CD14-positive monocyte (primary cell): ENCODE measurements at regions of chr12 and their contacts with region 1.

Region 1: GRCh38 chr12:51954561-51955361 is 3.3 kb downstream of the ACVR1B start:
- DNase-seq: peak; percentile 48 to 75 (median 71)
- H3K4me3 ChIP-seq: peak overlapping the region in 2 of 3 experiments; percentile 20 to 96
- H3K4me3 Mint-ChIP-seq: peak overlapping the region; percentile 91 to 96
- H3K27ac ChIP-seq: peak overlapping the region in 1 of 2 donors; percentile 82
- H3K27ac Mint-ChIP-seq: peak overlapping the region; percentile 73 to 88 (median 85)
- H3K4me1 ChIP-seq: peaks cover 50 to 61% of the 10 kb centered on the region in 2 donors
- H3K4me1 Mint-ChIP-seq: peaks cover 68% of the 10 kb centered on the region
- H3K27me3 ChIP-seq: peaks cover 3 to 5% of the 10 kb centered on the region in 2 donors
- H3K27me3 Mint-ChIP-seq: peaks cover 1 to 6% (median 4%) of the 10 kb centered on the region in 3 donors
- CTCF ChIP-seq: no peak

Region 2: DNA sequence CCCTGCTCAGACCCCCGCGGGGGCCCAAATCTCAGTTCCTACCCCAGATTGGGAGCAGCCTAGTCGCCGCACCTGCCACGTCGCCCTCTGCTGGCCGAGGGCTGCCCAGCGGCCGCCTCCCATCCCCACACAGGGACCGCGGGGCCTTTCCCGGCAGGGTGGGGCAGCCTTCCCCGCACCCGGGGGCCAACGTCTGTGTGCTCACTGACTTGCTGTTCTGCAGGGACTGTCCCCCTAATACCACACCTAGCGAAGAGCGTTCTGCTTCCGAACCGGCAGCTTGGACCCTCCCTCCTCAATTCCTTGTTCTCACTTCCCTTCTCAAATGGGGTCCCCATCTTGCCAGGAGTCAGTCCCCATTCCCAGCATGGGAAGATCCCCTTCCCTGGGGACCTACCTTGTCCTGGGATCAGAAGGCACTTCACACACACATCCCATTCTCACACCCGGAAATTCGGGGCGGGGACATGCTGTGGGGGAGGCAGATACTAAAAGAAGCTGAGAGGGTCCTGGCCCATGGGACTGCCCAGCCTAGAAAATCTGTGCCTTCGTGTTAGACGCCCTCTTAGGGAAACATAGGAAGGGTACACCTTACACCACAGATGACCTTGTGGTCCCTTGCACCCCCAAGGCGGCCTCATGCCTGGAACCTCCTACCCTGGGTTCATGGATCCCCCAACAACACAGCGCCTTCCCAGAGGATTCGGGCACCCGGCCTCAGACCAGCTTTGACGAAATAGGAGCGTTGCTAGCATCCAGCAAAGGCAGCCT is 31.1 kb before region 1 on chr12:
- intact Hi-C with region 1: loop called in 1 of 2 experiments (anchors 5 kb)
- DNase-seq: peak; percentile 34 to 69 (median 42)
- H3K4me3 ChIP-seq: peak overlapping the region in 1 of 3 experiments; percentile 60
- H3K4me3 Mint-ChIP-seq: peak overlapping the region; percentile 59 to 83
- H3K27ac ChIP-seq: peak overlapping the region; percentile 89 to 92
- H3K27ac Mint-ChIP-seq: peak overlapping the region; percentile 93 to 98 (median 96)
- H3K4me1 ChIP-seq: peaks cover 21 to 25% of the 10 kb centered on the region in 2 donors
- H3K4me1 Mint-ChIP-seq: peaks cover 38% of the 10 kb centered on the region
- H3K27me3 ChIP-seq: no peaks in the 10 kb centered on the region
- H3K27me3 Mint-ChIP-seq: peaks cover 2 to 6% (median 3%) of the 10 kb centered on the region in 3 donors
- CTCF ChIP-seq: peak; percentile 91

Region 3: GRCh38 chr12:51972849-51973273 is 18.1 kb after region 1 on chr12:
- intact Hi-C with region 1: loop called in 1 of 2 experiments (anchors 2 kb)
- DNase-seq: peak; percentile 90 to 98 (median 97)
- H3K4me3 ChIP-seq: peak overlapping the region; percentile 26 to 73 (median 44)
- H3K4me3 Mint-ChIP-seq: peak overlapping the region; percentile 63 to 76
- H3K27ac ChIP-seq: peak overlapping the region; percentile 87 to 97
- H3K27ac Mint-ChIP-seq: peak overlapping the region; percentile 87 to 97 (median 97)
- H3K4me1 ChIP-seq: peaks cover 84 to 91% of the 10 kb centered on the region in 2 donors
- H3K4me1 Mint-ChIP-seq: peaks cover 92% of the 10 kb centered on the region
- H3K27me3 ChIP-seq: no peaks in the 10 kb centered on the region
- H3K27me3 Mint-ChIP-seq: peaks cover 0 to 2% (median 0%) of the 10 kb centered on the region in 3 donors
- CTCF ChIP-seq: no peak

Region 4: GRCh38 chr12:51980051-51980808 is 25.5 kb after region 1 on chr12:
- intact Hi-C with region 1: loop called in 1 of 2 experiments (anchors 2 kb)
- DNase-seq: peak; percentile 65 to 82 (median 76)
- H3K4me3 ChIP-seq: no peak overlapping the region
- H3K4me3 Mint-ChIP-seq: no peak overlapping the region
- H3K27ac ChIP-seq: peak overlapping the region in 1 of 2 donors; percentile 13
- H3K27ac Mint-ChIP-seq: peak overlapping the region; percentile 23 to 88 (median 73)
- H3K4me1 ChIP-seq: peaks cover 40 to 45% of the 10 kb centered on the region in 2 donors
- H3K4me1 Mint-ChIP-seq: peaks cover 48% of the 10 kb centered on the region
- H3K27me3 ChIP-seq: no peaks in the 10 kb centered on the region
- H3K27me3 Mint-ChIP-seq: no peaks in the 10 kb centered on the region
- CTCF ChIP-seq: peak; percentile 94